A549 (cell line): ENCODE measurements at regions of chr10 and their contacts with region 1.

Region 1: DNA sequence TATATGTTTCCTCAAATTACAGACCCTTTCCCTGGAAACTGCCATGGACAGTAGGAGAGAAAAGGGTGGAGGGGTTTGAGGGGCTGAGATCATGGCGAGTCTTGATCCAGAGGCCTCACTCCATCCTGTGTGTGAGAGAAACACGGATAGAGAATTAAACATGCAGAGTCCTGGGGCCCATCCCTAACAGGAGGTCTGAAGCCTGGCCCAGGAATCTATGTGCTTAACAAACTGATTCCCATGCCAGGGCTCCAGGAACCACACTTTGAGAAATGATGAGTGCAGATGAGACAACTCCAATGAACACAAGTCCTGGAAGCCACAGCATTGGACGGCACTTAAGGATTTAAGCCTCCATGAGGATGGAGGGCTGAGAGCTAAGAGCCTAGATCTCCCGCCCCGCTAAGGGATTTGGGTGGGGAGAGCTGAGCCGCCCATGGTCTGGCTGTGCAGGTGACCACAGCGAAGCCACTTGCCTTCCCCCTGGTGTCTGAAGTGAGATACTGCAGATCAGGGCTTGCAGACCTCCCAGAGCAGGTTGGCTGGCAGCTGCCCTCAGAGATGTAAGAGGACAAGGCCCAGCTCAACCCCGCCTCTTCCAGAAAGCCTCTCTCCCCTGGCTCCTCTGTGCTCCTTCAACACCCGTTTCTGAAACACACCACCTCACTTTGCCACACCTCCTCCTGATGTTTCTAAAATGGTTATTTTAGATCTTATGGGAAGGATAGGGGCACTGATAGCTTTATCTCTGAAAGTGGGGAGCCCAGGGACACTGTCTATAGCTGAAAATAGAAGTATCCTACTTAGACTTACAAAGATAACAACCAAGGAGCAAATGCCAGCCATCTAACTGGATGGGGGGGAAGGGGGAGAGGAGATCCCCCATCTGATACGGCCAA is 24.8 kb upstream of the EIF5AL1 start:
- DNase-seq: peak; percentile 63 to 75
- ATAC-seq: peak; percentile 75 to 95
- H3K4me3 ChIP-seq: no peak overlapping the region
- H3K27ac ChIP-seq: peak overlapping the region; percentile 39 to 72; a peak in 5 of 6 replicates
- H3K4me1 ChIP-seq: peaks cover 12% of the 10 kb centered on the region
- CTCF ChIP-seq: peak; percentile 43; the same call in 2 of the 3 replicates
- EP300 ChIP-seq: no peak
- POLR2A ChIP-seq: no peak
- RAD21 ChIP-seq: peak; percentile 53 to 66

Region 2: DNA sequence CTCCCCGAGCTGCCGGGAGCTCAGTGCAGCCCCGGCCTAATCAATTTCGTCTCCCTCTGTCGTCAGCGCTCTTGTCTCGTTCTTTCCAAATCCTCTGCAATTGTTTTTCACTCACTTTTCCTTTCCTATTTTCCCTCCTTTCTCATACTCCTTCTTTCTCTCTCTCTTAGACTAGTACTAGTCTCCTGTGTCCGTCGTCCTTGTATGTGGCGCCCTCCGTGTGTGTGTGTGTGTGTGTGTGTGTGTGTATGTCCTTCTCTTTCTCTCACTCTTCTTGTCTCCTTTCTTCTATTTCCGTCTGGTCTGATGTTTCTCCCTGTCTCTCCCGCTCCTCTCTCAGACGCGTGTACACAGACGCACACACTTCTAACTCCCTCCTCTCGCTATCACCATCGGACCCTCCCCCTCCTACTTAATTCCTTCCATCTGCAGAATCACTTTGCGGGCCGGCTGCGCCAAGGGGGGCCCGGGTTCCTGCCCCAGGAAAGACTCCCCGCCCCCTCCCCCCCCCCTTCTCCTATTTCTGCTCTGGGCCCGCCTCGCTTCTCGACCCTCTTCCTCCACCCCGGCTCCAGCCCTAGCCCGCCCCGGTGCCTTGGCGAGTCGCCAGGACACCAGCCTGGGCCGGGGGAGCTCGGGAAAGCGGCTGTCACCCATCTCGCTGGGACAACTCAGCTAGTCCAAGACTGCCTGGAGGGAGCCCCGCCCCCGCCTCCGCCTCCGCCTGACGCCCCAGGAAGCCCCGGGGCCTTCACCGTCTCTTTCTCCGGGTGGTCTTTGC is 41.4 kb before region 1 on chr10:
- CTCF ChIA-PET with region 1: interaction called, 9 read pairs
- POLR2A ChIA-PET with region 1: interaction called, 10 read pairs
- DNase-seq: peak in 1 of 2 experiments; percentile 27
- ATAC-seq: peak; percentile 16 to 22
- H3K4me3 ChIP-seq: peak overlapping the region; percentile 75
- H3K27ac ChIP-seq: peak overlapping the region; percentile 13 to 84; a peak in 4 of 6 replicates
- H3K4me1 ChIP-seq: peaks cover 22% of the 10 kb centered on the region
- CTCF ChIP-seq: no peak
- EP300 ChIP-seq: no peak
- POLR2A ChIP-seq: no peak
- RAD21 ChIP-seq: no peak

Region 3: GRCh38 chr10:79468024-79468560 is 19.5 kb before region 1 on chr10:
- CTCF ChIA-PET with region 1: interaction called, 32 read pairs
- POLR2A ChIA-PET with region 1: no interaction called
- DNase-seq: no peak
- ATAC-seq: peak in 1 of 2 experiments; percentile 38; a peak in 3 of 6 replicates
- H3K4me3 ChIP-seq: no peak overlapping the region
- H3K27ac ChIP-seq: no peak overlapping the region
- H3K4me1 ChIP-seq: no peaks in the 10 kb centered on the region
- CTCF ChIP-seq: no peak
- EP300 ChIP-seq: no peak
- POLR2A ChIP-seq: no peak
- RAD21 ChIP-seq: no peak

Region 4: GRCh38 chr10:79477456-79477855 is 10.1 kb before region 1 on chr10:
- CTCF ChIA-PET with region 1: interaction called, 16 read pairs
- POLR2A ChIA-PET with region 1: no interaction called
- DNase-seq: no peak
- ATAC-seq: no peak
- H3K4me3 ChIP-seq: no peak overlapping the region
- H3K27ac ChIP-seq: no peak overlapping the region
- H3K4me1 ChIP-seq: no peaks in the 10 kb centered on the region
- CTCF ChIP-seq: no peak
- EP300 ChIP-seq: no peak
- POLR2A ChIP-seq: no peak
- RAD21 ChIP-seq: no peak

Region 5: GRCh38 chr10:79628988-79629954 is 141.7 kb after region 1 on chr10:
- CTCF ChIA-PET with region 1: no interaction called
- POLR2A ChIA-PET with region 1: no interaction called
- DNase-seq: no peak
- ATAC-seq: no peak; a peak in 1 of 6 replicates
- H3K4me3 ChIP-seq: no peak overlapping the region
- H3K27ac ChIP-seq: no peak overlapping the region
- H3K4me1 ChIP-seq: 0 out of 3 replicates have a peak, but pooled peaks cover 2% of the 10 kb centered on the region
- CTCF ChIP-seq: no peak
- EP300 ChIP-seq: no peak
- POLR2A ChIP-seq: no peak
- RAD21 ChIP-seq: no peak